Aorta (tissue), 5 donors: ENCODE measurements at regions of chr17 and their contacts with region 1.

Region 1: GRCh38 chr17:52106638-52107261 is 51.8 kb downstream of the CA10 start:
- DNase-seq: no peak
- ATAC-seq: no peak
- H3K4me3 ChIP-seq: no peak overlapping the region
- H3K27ac ChIP-seq: no peak overlapping the region
- H3K4me1 ChIP-seq: no peaks in the 10 kb centered on the region
- H3K27me3 ChIP-seq: no peaks in the 10 kb centered on the region

Region 2: DNA sequence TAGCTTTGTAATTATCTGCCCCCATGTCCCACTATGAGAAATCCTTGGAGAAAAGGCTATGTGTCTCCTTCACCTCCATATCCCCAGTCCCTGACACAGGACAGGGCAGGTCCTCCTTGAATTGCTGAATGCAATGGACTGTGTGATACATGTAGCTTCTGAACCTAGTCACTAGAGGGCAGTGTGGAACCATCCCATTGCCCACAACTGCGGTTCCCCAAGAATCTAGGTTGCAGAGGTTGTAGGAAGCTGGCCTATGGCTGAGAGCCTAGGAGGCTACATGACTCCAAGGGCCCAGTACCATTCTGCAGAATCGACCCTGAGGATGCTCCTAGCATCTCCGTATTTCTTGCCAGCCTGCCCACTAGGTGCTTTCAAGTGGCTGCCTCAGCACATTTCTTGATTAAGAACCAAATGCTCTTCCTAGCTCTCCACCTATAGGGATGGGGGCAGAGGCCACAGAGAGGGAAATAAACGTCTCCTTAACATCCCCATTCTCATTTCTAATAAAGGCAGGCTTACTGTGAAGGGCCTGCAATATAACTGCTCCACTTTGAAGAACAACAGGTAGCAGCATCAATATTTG is 342.3 kb before region 1 on chr17:
- intact Hi-C with region 1: loop called in 1 of 2 experiments (anchors 10 kb)
- DNase-seq: no peak
- ATAC-seq: peak; percentile 79
- H3K4me3 ChIP-seq: no peak overlapping the region
- H3K27ac ChIP-seq: no peak overlapping the region
- H3K4me1 ChIP-seq: no peaks in the 10 kb centered on the region
- H3K27me3 ChIP-seq: no peaks in the 10 kb centered on the region

Region 3: GRCh38 chr17:51770031-51770759 is 336.6 kb before region 1 on chr17:
- intact Hi-C with region 1: loop called (anchors 10 kb)
- DNase-seq: no peak
- ATAC-seq: no peak
- H3K4me3 ChIP-seq: no peak overlapping the region
- H3K27ac ChIP-seq: no peak overlapping the region
- H3K4me1 ChIP-seq: no peaks in the 10 kb centered on the region
- H3K27me3 ChIP-seq: no peaks in the 10 kb centered on the region